T-cell (primary cell): ENCODE measurements at regions of chr17 and their contacts with region 1.

Region 1: DNA sequence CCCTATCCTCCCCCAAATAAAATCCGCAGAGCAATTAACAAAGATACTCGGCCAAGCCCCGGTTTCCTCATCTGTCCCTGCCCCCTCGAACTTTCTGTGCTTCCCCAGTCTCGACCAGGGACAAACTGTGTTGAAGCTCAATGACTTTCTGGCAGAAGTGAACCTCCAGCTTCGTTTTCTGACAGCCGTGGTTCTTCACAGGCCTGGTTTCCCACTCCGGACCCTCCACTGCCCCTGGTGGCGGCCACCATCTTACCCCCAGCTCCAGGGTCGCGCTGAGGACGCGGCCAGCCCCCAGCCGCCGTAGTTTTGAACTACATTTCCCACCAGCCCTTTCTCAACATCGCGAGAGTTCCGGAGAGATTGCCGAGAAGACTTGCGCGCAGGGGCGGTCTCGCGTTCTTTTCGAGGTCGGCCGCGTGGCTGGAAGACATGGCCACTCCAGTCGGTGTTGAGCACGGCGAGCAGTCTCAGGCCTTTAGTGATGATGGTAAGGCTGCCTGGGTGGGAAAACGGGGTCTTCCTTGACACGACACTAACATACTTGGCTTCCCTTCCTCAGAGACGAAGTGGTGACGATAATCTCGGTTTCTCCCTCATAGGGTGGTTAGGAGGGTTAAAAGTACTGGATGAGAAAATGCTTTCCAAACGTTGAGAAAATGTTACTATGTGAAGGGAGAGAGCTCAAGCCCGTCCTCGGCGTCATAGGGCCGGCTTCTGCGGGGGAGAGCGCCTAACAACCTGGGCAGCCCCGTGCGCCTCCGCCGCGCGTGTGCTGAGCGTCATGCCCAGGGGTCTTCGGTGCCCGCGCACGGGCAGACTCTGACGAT is 17.7 kb downstream of the PRCD start:
- DNase-seq: peak; percentile 83 to 96 (median 90)
- ATAC-seq: peak; percentile 84 to 94 (median 88)
- H3K4me3 ChIP-seq: peak overlapping the region; percentile 83 to 87
- H3K4me3 Mint-ChIP-seq: peak overlapping the region; percentile 95 to 98 (median 96)
- H3K27ac ChIP-seq: peak overlapping the region; percentile 97
- H3K27ac Mint-ChIP-seq: peak overlapping the region; percentile 97 to 98
- H3K4me1 ChIP-seq: peaks cover 19 to 49% of the 10 kb centered on the region in 2 experiments
- H3K4me1 Mint-ChIP-seq: peaks cover 42 to 66% (median 59%) of the 10 kb centered on the region in 3 donors
- H3K27me3 ChIP-seq: no peaks in the 10 kb centered on the region
- H3K27me3 Mint-ChIP-seq: no peaks in the 10 kb centered on the region

Region 2: DNA sequence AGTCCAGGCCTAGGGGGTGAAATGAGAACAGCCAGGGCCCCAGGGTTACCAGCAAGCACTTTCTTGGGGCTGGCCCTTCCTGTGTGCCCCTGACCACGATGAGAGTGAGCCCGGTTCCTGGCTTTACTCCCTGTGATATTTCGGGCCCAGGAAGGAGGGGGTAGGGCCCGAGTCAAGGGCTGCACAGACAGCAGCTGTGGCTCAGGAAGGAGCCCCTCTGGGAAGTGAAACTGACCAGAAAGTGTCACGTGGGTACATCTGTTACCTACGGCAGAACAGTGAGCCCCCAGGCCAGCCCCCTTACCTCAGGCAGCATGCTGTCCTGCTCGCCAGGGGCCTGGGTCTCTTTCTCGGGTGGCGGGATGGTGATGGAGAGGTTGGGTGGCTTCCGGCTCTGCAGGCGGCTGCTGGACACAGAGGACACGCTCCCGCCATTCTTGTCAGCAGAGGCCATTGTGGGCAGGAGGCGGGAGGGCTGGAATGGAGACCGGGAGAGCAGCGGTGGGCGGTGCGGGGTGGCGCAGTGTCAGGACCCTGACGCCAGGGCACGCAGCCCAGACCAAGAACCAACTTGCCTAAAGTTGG is 76.4 kb before region 1 on chr17:
- CTCF ChIA-PET with region 1: no interaction called
- POLR2A ChIA-PET with region 1: no interaction called
- DNase-seq: peak in 1 of 35 experiments; percentile 22
- ATAC-seq: peak in 1 of 4 experiments; percentile 14
- H3K4me3 ChIP-seq: no peak overlapping the region
- H3K4me3 Mint-ChIP-seq: no peak overlapping the region
- H3K27ac ChIP-seq: no peak overlapping the region
- H3K27ac Mint-ChIP-seq: no peak overlapping the region
- H3K4me1 ChIP-seq: peaks cover 0 to 8% of the 10 kb centered on the region in 2 experiments
- H3K4me1 Mint-ChIP-seq: peaks cover 3 to 16% (median 7%) of the 10 kb centered on the region in 3 donors
- H3K27me3 ChIP-seq: no peaks in the 10 kb centered on the region
- H3K27me3 Mint-ChIP-seq: no peaks in the 10 kb centered on the region

Region 3: GRCh38 chr17:76567634-76568432 is 10.2 kb after region 1 on chr17:
- CTCF ChIA-PET with region 1: interaction called, 3 to 10 read pairs
- POLR2A ChIA-PET with region 1: interaction called in 1 of 2 experiments, 3 read pairs
- DNase-seq: peak in 8 of 35 experiments; percentile 15 to 46 (median 27)
- ATAC-seq: peak in 3 of 4 experiments; percentile 14 to 30 (median 17)
- H3K4me3 ChIP-seq: no peak overlapping the region
- H3K4me3 Mint-ChIP-seq: peak overlapping the region in 1 of 3 donors; percentile 12
- H3K27ac ChIP-seq: peak overlapping the region; percentile 3
- H3K27ac Mint-ChIP-seq: no peak overlapping the region
- H3K4me1 ChIP-seq: peaks cover 0 to 26% of the 10 kb centered on the region in 2 experiments
- H3K4me1 Mint-ChIP-seq: peaks cover 37 to 44% (median 37%) of the 10 kb centered on the region in 3 donors
- H3K27me3 ChIP-seq: peaks cover 0 to 13% of the 10 kb centered on the region in 2 experiments
- H3K27me3 Mint-ChIP-seq: no peaks in the 10 kb centered on the region